Activated B cell treated with CpG ODN at 0.5 μM for 24 hours (primary cell): ENCODE measurements at regions of chr7 and their contacts with region 1.

Region 1: DNA sequence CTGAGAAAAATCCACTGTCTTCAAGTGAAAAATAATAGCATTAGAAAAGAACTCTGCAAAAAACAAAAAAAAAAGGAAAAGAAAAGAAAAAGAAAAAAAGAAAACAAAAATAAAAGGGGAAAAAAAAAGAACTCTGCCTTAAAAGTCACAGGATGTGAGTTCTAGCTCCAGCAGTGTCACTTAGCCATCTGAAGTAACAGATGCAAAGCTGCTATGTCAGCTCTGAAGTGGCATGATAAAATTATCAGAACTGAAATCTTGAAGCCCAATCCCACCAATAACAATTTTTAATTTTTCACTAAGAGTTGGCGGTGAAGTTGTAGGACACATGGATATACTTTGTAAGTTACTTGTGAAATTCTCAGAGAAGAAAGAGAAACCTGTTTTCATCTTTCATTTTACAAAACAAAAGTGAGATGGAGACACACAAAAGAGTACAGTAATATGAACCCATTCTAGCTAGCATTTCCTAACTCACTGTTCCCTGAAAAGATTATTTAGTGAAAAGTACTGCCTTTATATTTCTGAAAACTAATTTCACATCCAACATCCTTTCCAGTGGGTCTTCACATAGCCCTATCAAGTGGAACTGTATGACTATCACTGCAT is 103.5 kb downstream of the ELAPOR2 start:
- DNase-seq: no peak
- ATAC-seq: no peak
- H3K4me3 Mint-ChIP-seq: no peak overlapping the region
- H3K27ac Mint-ChIP-seq: no peak overlapping the region
- H3K4me1 Mint-ChIP-seq: peaks cover 3% of the 10 kb centered on the region
- H3K27me3 Mint-ChIP-seq: no peaks in the 10 kb centered on the region
- CTCF ChIP-seq: no peak

Region 2: DNA sequence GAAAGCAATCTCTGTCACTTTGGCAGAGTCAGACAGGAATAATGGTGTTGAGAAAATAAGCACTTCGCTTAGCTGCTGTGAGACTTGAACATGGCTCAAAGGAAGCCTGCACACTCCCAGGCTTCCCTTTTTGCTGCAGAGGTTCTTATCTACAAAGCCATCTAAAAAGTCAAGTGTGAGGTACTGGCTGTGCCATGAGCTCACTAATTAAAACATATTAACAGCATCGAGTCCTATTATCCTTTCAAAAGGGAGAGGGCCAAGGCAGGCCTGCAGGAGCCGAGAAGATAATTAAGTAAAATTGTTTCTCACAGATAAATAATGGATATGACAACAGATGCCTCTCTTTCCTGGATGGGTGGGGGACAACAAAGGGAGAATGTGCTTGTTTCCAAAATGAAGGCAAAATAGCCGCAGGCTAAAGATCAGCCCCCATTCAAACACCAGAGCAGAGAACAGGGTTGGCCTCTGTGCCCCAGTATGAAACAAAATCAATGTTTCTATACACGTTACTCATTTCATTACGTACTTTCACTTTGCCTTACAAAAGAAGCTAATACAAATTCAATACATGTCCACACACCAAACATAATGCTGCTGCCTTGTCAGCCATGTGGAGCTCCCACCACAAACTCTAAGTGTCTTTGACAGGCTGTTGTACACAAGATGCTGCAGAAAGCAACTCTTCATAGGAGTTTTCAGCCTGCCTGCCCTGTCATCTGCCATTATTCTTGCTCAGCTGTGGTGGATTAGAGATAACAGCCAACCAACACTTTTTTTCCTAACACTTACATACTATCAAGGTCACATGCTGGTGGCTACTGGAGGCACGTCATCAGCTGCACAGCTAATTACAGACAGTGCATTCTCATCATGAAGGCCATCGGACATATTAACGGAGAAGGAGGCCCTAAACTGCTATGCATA is 48.1 kb after region 1 on chr7:
- CTCF ChIA-PET with region 1: no interaction called
- POLR2A ChIA-PET with region 1: no interaction called
- intact Hi-C with region 1: loop called (anchors 5 kb)
- DNase-seq: no peak
- ATAC-seq: no peak
- H3K4me3 Mint-ChIP-seq: no peak overlapping the region
- H3K27ac Mint-ChIP-seq: no peak overlapping the region
- H3K4me1 Mint-ChIP-seq: no peaks in the 10 kb centered on the region
- H3K27me3 Mint-ChIP-seq: no peaks in the 10 kb centered on the region
- CTCF ChIP-seq: no peak

Region 3: GRCh38 chr7:87038993-87039716 is 83.2 kb after region 1 on chr7:
- CTCF ChIA-PET with region 1: interaction called, 3 read pairs
- POLR2A ChIA-PET with region 1: no interaction called
- intact Hi-C with region 1: loop called (anchors 5 kb)
- DNase-seq: no peak
- ATAC-seq: no peak
- H3K4me3 Mint-ChIP-seq: peak overlapping the region; percentile 75
- H3K27ac Mint-ChIP-seq: peak overlapping the region; percentile 1
- H3K4me1 Mint-ChIP-seq: no peaks in the 10 kb centered on the region
- H3K27me3 Mint-ChIP-seq: peaks cover 5% of the 10 kb centered on the region
- CTCF ChIP-seq: no peak